ENCODE measurements at regions of chr12 and their contacts with region 1.

Region 1: GRCh38 chr12:4164559-4165558 is 108.7 kb upstream of the CCND2 start:
- DNase-seq: peak; percentile 80
- ATAC-seq: peak; percentile 89

Region 2: GRCh38 chr12:4269279-4269991 is 104.6 kb after region 1 on chr12:
- intact Hi-C with region 1: loop called (anchors 10 kb)
- DNase-seq: peak; percentile 93
- ATAC-seq: peak; percentile 45

Measured in Right ventricle myocardium inferior (tissue), 1 donor.